ENCODE measurements at regions of chr17 and their contacts with region 1.

Region 1: GRCh38 chr17:41738077-41738735 is 3.8 kb upstream of the HAP1 start:
- DNase-seq: peak; percentile 71 to 81
- H3K4me3 ChIP-seq: no peak overlapping the region
- H3K27ac ChIP-seq: no peak overlapping the region
- H3K4me1 ChIP-seq: peaks cover 0 to 27% (median 13%) of the 10 kb centered on the region in 4 donors
- H3K27me3 ChIP-seq: peaks cover 4 to 54% of the 10 kb centered on the region in 2 donors
- CTCF ChIP-seq: peak; percentile 98

Region 2: GRCh38 chr17:41801374-41802271 is 63.4 kb after region 1 on chr17:
- intact Hi-C with region 1: loop called (anchors 1 kb)
- DNase-seq: peak; percentile 83 to 84
- H3K4me3 ChIP-seq: peak overlapping the region in 1 of 2 donors; percentile 31
- H3K27ac ChIP-seq: no peak overlapping the region
- H3K4me1 ChIP-seq: peaks cover 0 to 12% (median 7%) of the 10 kb centered on the region in 4 donors
- H3K27me3 ChIP-seq: no peaks in the 10 kb centered on the region
- CTCF ChIP-seq: peak; percentile 96 to 97

Region 3: GRCh38 chr17:41885733-41886132 is 147.5 kb after region 1 on chr17:
- intact Hi-C with region 1: loop called (anchors 10 kb)
- DNase-seq: no peak
- H3K4me3 ChIP-seq: no peak overlapping the region
- H3K27ac ChIP-seq: no peak overlapping the region
- H3K4me1 ChIP-seq: no peaks in the 10 kb centered on the region
- H3K27me3 ChIP-seq: no peaks in the 10 kb centered on the region
- CTCF ChIP-seq: no peak